ENCODE measurements at regions of chr9 and their contacts with region 1.

Region 1: GRCh38 chr9:25964239-25964638 is 286.0 kb upstream of the TUSC1 start:
- DNase-seq: peak; percentile 74 to 86
- H3K4me3 ChIP-seq: no peak overlapping the region
- H3K4me1 ChIP-seq: no peaks in the 10 kb centered on the region
- H3K27me3 ChIP-seq: no peaks in the 10 kb centered on the region

Region 2: DNA sequence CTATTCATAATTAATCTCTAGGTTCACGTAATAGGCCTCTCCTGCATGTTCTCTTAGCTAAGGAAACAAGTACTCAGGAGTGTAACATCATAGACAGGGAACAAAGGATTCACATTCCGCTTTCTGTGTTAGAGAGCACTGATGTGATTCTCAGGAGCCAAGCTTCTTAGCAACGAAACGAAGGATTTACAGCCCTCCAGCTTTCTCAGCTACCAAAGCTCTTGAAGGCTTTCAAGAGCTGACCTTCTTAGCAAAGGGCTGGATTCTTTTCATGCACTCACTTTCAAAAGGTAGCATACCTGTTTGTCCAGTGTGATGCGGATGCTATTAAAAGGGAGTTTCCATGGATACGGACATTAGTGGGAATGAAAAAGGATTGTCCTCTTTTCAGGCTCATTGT is 393.4 kb before region 1 on chr9:
- in situ Hi-C with region 1: no loop called
- DNase-seq: no peak
- H3K4me3 ChIP-seq: no peak overlapping the region
- H3K4me1 ChIP-seq: no peaks in the 10 kb centered on the region
- H3K27me3 ChIP-seq: no peaks in the 10 kb centered on the region

Region 3: DNA sequence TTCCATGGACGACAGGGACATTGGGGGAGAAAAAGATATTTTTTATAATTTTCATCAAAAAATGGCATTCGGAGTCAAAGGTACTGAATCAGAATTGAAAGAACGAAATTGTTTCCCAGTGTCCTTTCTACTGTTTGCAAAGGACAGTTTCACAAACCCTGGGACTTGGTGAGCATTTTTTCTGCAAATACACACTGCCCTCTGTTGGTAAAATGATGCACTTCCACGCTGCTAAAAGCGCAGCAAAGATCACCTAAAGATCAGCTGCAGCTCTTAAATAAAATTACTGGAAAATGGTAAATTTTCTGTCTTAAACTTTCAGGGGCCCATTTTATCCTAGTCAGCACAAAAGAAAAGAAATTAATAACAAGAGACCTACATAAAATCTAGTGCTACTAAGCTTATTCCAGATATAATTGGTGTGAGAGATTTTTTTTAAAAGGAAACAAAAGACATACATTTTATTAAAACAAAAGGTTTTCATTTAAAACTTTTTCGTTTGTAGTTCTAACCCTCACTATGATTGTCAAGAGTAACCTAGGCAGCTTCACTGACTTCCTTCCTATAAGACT is 362.3 kb after region 1 on chr9:
- in situ Hi-C with region 1: loop called (anchors 10 kb)
- DNase-seq: peak; percentile 61 to 65
- H3K4me3 ChIP-seq: no peak overlapping the region
- H3K4me1 ChIP-seq: no peaks in the 10 kb centered on the region
- H3K27me3 ChIP-seq: no peaks in the 10 kb centered on the region

Region 4: GRCh38 chr9:26637101-26637500 is 672.9 kb after region 1 on chr9:
- in situ Hi-C with region 1: loop called (anchors 25 kb)
- DNase-seq: peak; percentile 82 to 97
- H3K4me3 ChIP-seq: no peak overlapping the region
- H3K4me1 ChIP-seq: peaks cover 15% of the 10 kb centered on the region
- H3K27me3 ChIP-seq: no peaks in the 10 kb centered on the region

Measured in HAP-1 (cell line).